Heart right ventricle (tissue), 16 donors: ENCODE measurements at regions of chr1 and their contacts with region 1.

Region 1: DNA sequence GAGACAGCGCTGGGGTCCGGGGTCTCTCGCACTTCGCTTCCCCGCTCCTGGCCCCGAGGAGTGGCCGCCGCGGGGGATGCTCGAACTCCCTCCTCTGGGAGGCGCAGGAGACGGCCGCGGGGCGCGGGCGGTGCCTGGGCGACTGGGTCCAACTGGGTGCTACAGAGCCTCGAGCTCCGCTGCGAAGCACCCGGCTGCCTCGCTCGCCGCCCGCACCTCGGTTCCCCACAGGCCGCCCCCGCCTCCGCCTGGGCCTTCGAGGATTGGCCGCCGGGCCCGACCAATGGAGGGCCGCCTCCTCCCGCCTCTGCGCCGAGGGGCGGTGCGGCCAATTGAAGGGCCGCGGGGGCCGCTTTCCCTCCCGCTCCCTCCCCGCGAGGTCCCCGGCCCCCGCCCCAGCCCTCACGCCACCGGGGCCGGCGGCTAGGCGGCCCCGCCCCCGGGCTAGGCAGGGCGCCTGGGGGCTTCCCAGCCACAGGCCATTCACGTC is at the start of gene CNN3:
- DNase-seq: peak; percentile 91 to 94
- ATAC-seq: peak; percentile 93 to 97 (median 94)
- H3K4me3 ChIP-seq: peak within 1 kb of the TSS; percentile 61 to 96 (median 90)
- H3K27ac ChIP-seq: peak within 1 kb of the TSS; percentile 93 to 100 (median 98)
- H3K4me1 ChIP-seq: peaks cover 16 to 66% (median 56%) of the 10 kb centered on the region in 9 donors
- H3K27me3 ChIP-seq: peaks cover 0 to 50% (median 0%) of the 10 kb centered on the region in 7 donors
- CTCF ChIP-seq: no peak
- total RNA-seq, gene CNN3: 45.8 to 108 (median 67.2) TPM

Region 2: GRCh38 chr1:94688646-94689045 is 238.3 kb before region 1 on chr1:
- intact Hi-C with region 1: no loop called
- DNase-seq: no peak
- ATAC-seq: no peak
- H3K4me3 ChIP-seq: no peak overlapping the region
- H3K27ac ChIP-seq: peak overlapping the region in 1 of 10 donors; percentile 20
- H3K4me1 ChIP-seq: peaks cover 0 to 4% (median 0%) of the 10 kb centered on the region in 9 donors
- H3K27me3 ChIP-seq: no peaks in the 10 kb centered on the region
- CTCF ChIP-seq: no peak

Region 3: GRCh38 chr1:94863919-94864318 is 63.0 kb before region 1 on chr1:
- intact Hi-C with region 1: loop called in 5 of 10 experiments (anchors 2 to 10 kb)
- DNase-seq: peak in 1 of 2 donors; percentile 39
- ATAC-seq: peak; percentile 53 to 92 (median 70)
- H3K4me3 ChIP-seq: peak overlapping the region in 1 of 10 donors; percentile 1
- H3K27ac ChIP-seq: peak overlapping the region; percentile 67 to 88 (median 80)
- H3K4me1 ChIP-seq: peaks cover 6 to 74% (median 39%) of the 10 kb centered on the region in 9 donors
- H3K27me3 ChIP-seq: no peaks in the 10 kb centered on the region
- CTCF ChIP-seq: no peak

Region 4: GRCh38 chr1:94971491-94971924 is 44.5 kb after region 1 on chr1:
- intact Hi-C with region 1: no loop called
- DNase-seq: no peak
- ATAC-seq: peak in 2 of 8 donors; percentile 20 to 25
- H3K4me3 ChIP-seq: no peak overlapping the region
- H3K27ac ChIP-seq: peak overlapping the region in 6 of 10 donors; percentile 4 to 68 (median 24)
- H3K4me1 ChIP-seq: peaks cover 0 to 43% (median 29%) of the 10 kb centered on the region in 9 donors
- H3K27me3 ChIP-seq: no peaks in the 10 kb centered on the region
- CTCF ChIP-seq: no peak

Region 5: DNA sequence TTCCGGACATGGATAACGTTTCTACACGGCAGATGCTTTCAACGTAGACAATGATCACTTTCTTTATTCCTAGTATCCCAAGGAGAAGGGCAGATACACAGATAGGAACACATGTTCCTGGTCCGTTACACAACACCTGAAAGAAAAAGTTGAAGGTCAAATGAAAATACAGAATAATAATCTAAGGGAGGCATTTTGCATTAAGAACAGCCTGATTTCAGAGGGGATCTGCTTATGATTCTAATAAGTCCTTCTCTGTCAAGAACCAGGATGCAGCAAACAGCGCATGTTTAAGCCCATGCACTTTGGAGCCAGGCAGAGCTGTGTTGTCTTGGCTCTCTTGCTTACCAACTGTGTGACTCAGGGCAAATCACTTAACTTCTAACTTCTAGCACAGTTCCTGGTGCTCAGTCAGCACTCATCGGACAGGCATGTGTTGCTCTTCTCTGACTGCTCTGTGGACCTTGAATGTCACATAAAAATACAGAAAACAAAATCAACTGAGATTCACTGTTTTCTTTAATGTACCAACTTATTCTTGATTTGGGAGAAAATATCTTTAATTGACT is 56.3 kb after region 1 on chr1:
- intact Hi-C with region 1: loop called in 2 of 10 experiments (anchors 2 to 5 kb)
- DNase-seq: peak in 1 of 2 donors; percentile 19
- ATAC-seq: peak in 7 of 8 donors; percentile 31 to 92 (median 64)
- H3K4me3 ChIP-seq: peak overlapping the region in 2 of 10 donors; percentile 10 to 11
- H3K27ac ChIP-seq: peak overlapping the region in 8 of 10 donors; percentile 0 to 80 (median 42)
- H3K4me1 ChIP-seq: peaks cover 6 to 57% (median 30%) of the 10 kb centered on the region in 9 donors
- H3K27me3 ChIP-seq: no peaks in the 10 kb centered on the region
- CTCF ChIP-seq: no peak

Region 6: GRCh38 chr1:95013950-95014574 is 87.1 kb after region 1 on chr1:
- intact Hi-C with region 1: loop called in 2 of 10 experiments (anchors 10 kb)
- DNase-seq: no peak
- ATAC-seq: peak; percentile 47 to 79 (median 72)
- H3K4me3 ChIP-seq: no peak overlapping the region
- H3K27ac ChIP-seq: peak overlapping the region in 9 of 10 donors; percentile 5 to 59 (median 42)
- H3K4me1 ChIP-seq: peaks cover 3 to 40% (median 22%) of the 10 kb centered on the region in 9 donors
- H3K27me3 ChIP-seq: no peaks in the 10 kb centered on the region
- CTCF ChIP-seq: no peak

Region 7: DNA sequence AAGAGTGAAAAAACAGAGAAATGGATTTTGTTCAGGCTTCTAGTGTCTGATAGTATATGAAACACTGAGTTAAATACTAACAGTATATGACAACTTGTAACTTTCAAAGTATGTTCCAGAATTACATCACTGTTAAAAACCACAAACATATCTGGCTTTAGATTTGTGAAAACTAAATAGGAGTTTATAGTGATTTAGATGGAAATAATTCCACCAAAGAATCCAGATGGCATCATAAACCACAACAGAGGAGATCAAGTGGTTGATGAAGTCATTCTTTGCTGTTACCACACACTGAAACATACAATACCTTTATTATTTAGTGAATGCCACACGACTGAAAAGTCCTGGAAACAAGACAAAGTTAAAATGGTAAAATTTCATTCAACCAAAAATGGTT is 108.6 kb after region 1 on chr1:
- intact Hi-C with region 1: loop called in 5 of 10 experiments (anchors 5 to 10 kb)
- DNase-seq: no peak
- ATAC-seq: no peak
- H3K4me3 ChIP-seq: no peak overlapping the region
- H3K27ac ChIP-seq: no peak overlapping the region
- H3K4me1 ChIP-seq: no peaks in the 10 kb centered on the region
- H3K27me3 ChIP-seq: no peaks in the 10 kb centered on the region
- CTCF ChIP-seq: no peak